IMR-90 (cell line): ENCODE measurements at regions of chr1 and their contacts with region 1.

Region 1: GRCh38 chr1:28886731-28887418 is 27.5 kb upstream of the EPB41 start:
- DNase-seq: peak; percentile 48
- ATAC-seq: peak; percentile 83
- H3K4me3 ChIP-seq: peak overlapping the region; percentile 65
- H3K27ac ChIP-seq: no peak overlapping the region; the same call in 1 of the 2 replicates
- H3K4me1 ChIP-seq: peaks cover 11% of the 10 kb centered on the region
- H3K27me3 ChIP-seq: peaks cover 8% of the 10 kb centered on the region
- CTCF ChIP-seq: no peak
- POLR2A ChIP-seq: no peak
- RAD21 ChIP-seq: no peak

Region 2: DNA sequence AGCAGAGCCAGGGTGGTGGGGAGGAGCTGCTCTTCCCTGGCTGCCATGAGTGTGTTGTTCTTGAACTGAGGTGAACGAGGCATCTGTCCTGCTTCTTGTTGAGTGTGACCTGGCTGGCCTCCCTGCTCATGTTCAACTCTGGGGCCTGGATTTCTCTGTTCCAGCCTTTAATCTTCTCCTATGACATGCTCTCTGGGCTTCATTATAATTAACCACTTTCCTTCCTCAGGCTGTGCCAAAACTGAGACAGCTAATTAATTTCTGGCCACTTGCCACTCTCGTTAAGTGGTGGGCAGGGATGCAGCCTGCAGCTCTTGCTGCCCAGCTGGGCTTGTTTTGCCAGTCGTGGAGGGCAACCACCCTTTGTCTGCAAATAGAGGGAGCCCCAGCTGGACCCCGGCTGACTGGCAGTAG is 51.6 kb before region 1 on chr1:
- CTCF ChIA-PET with region 1: no interaction called
- POLR2A ChIA-PET with region 1: no interaction called
- dilution Hi-C with region 1: no loop called
- in situ Hi-C with region 1: no loop called
- intact Hi-C with region 1: no loop called
- DNase-seq: no peak
- ATAC-seq: no peak
- H3K4me3 ChIP-seq: no peak overlapping the region
- H3K27ac ChIP-seq: no peak overlapping the region
- H3K4me1 ChIP-seq: no peaks in the 10 kb centered on the region
- H3K27me3 ChIP-seq: peaks cover 26% of the 10 kb centered on the region
- CTCF ChIP-seq: no peak
- POLR2A ChIP-seq: no peak
- RAD21 ChIP-seq: no peak

Region 3: DNA sequence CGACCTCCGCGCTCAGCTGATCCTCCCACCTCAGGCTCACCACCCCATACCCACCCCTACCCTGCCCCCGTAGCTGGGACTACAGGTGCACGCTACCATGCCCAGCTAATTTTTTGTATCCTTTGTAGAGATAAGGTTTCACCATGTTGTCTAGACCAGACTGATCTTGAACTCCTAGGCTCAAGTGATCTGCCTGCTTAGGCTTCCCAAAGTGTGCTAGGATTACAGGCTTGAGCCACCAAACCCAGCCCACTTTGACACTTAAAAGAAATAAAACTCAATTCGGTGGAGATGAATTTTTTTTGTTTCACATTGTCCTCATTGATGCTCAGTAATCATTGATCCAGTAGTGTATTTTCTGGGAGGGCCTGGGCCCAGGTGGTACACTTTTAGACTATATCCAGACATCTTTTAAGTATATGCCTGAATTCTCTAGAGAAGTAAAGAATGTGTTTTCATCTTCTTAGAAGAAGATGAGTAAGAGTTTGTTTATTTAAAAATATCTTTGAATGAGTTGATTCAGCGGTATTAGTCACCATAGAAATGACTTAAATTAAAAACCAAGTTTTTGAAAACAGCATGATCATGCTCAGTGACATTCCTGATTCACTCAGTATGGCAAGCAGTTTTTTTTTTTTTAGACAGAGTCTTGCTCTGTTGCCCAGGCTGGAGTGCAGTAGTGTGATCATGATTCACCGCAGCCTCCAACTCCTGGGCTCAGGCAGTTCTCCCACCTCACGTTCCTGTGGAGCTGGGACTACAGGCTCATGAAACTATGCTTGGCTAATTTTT is 85.3 kb after region 1 on chr1:
- CTCF ChIA-PET with region 1: no interaction called
- POLR2A ChIA-PET with region 1: no interaction called
- dilution Hi-C with region 1: no loop called
- in situ Hi-C with region 1: no loop called
- intact Hi-C with region 1: loop called (anchors 2 kb)
- DNase-seq: peak; percentile 96
- ATAC-seq: peak; percentile 91
- H3K4me3 ChIP-seq: no peak overlapping the region
- H3K27ac ChIP-seq: peak overlapping the region; percentile 61
- H3K4me1 ChIP-seq: peaks cover 4% of the 10 kb centered on the region
- H3K27me3 ChIP-seq: no peaks in the 10 kb centered on the region
- CTCF ChIP-seq: no peak
- POLR2A ChIP-seq: no peak
- RAD21 ChIP-seq: no peak

Region 4: GRCh38 chr1:29181413-29182225 is 294.7 kb after region 1 on chr1 and contains the start of gene SRSF4:
- CTCF ChIA-PET with region 1: interaction called, 9 read pairs
- POLR2A ChIA-PET with region 1: no interaction called
- dilution Hi-C with region 1: no loop called
- in situ Hi-C with region 1: no loop called
- intact Hi-C with region 1: loop called (anchors 5 kb)
- DNase-seq: peak; percentile 98
- ATAC-seq: peak; percentile 94
- H3K4me3 ChIP-seq: peak within 1 kb of the TSS; percentile 84
- H3K27ac ChIP-seq: peak within 1 kb of the TSS; percentile 97
- H3K4me1 ChIP-seq: peaks cover 10% of the 10 kb centered on the region
- H3K27me3 ChIP-seq: no peaks in the 10 kb centered on the region
- CTCF ChIP-seq: peak; percentile 82
- POLR2A ChIP-seq: peak; percentile 90
- RAD21 ChIP-seq: peak; percentile 59
- total RNA-seq, gene SRSF4: 20.8 and 38.6 TPM in 2 replicates

Region 5: DNA sequence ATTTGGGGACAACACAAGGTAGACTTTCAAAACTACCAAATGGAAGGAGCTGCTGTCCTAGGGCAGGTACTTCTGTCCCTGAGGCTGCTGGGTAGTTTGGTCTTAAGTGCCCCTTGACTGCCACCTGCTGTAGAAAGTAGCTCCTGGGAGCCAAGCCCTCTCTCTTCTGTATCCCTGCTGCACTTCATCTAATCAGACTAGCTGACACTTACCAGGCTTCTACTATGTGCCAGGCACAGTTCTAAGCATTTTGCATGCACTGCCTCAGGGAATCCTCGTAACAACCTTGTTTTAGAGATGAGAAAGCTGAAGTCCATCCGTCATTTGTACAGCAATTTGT is 310.7 kb after region 1 on chr1:
- CTCF ChIA-PET with region 1: interaction called, 28 read pairs
- POLR2A ChIA-PET with region 1: no interaction called
- dilution Hi-C with region 1: no loop called
- in situ Hi-C with region 1: loop called (anchors 5 kb)
- intact Hi-C with region 1: loop called (anchors 1 kb)
- DNase-seq: peak; percentile 62
- ATAC-seq: peak; percentile 37
- H3K4me3 ChIP-seq: no peak overlapping the region
- H3K27ac ChIP-seq: peak overlapping the region; percentile 42; the same call in 1 of the 2 replicates
- H3K4me1 ChIP-seq: peaks cover 26% of the 10 kb centered on the region
- H3K27me3 ChIP-seq: no peaks in the 10 kb centered on the region
- CTCF ChIP-seq: peak; percentile 51
- POLR2A ChIP-seq: no peak
- RAD21 ChIP-seq: peak; percentile 61

Region 6: GRCh38 chr1:29202584-29203340 is 315.9 kb after region 1 on chr1:
- CTCF ChIA-PET with region 1: interaction called, 28 read pairs
- POLR2A ChIA-PET with region 1: no interaction called
- dilution Hi-C with region 1: no loop called
- in situ Hi-C with region 1: loop called (anchors 5 kb)
- intact Hi-C with region 1: loop called (anchors 1 kb)
- DNase-seq: peak; percentile 99
- ATAC-seq: peak; percentile 93
- H3K4me3 ChIP-seq: no peak overlapping the region
- H3K27ac ChIP-seq: peak overlapping the region; percentile 85
- H3K4me1 ChIP-seq: peaks cover 16% of the 10 kb centered on the region
- H3K27me3 ChIP-seq: no peaks in the 10 kb centered on the region
- CTCF ChIP-seq: peak; percentile 98
- POLR2A ChIP-seq: peak; percentile 52; the same call in 1 of the 2 replicates
- RAD21 ChIP-seq: peak; percentile 99